Mucosa of descending colon (tissue), 3 donors: ENCODE measurements at regions of chr7 and their contacts with region 1.

Region 1: GRCh38 chr7:27160546-27161213 is 4.2 kb upstream of the HOXA7 start:
- DNase-seq: peak; percentile 93 to 94 (median 94)
- ATAC-seq: peak; percentile 70
- H3K4me3 ChIP-seq: peak overlapping the region; percentile 15
- H3K4me1 ChIP-seq: peaks cover 19% of the 10 kb centered on the region
- CTCF ChIP-seq: peak; percentile 99

Region 2: DNA sequence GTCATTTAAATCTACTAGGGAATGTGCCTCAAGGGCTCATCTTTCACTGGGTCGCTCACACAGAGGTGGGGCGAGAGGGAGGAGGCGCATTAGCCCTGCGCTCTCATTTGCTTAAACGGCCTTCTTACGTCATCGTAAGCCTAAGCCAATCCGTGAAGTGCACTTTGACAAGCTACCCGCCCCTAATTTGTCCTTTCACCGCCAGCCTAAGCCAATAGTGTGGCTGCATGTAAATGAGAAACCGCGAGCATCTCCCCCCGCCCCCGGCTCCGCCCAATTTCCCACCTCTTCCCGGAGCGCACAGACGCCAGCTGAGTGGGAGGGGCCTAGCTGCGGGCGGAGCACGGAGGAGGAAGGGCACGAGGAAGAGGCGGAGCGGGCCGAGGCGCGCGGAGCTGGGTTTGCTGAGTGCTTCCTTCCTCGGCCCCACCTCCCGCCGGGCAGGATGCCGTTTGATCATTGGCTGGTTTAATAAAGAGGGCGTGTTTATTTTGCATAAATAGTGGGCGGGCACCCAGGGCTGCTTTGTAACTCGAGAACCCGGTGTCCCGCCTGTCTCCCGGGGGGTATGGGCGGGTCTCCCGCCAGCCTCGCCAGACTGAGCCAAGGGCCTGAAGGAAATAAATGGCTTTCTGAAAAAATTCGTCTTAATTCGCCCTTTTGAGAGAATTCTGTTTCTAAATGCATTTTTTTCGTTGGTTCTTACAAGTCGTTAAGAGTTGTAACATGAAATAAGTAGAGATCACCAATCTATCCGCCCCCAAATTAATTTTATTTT is 1298.2 kb before region 1 on chr7:
- intact Hi-C with region 1: loop called (anchors 5 to 10 kb)
- DNase-seq: peak; percentile 99
- ATAC-seq: peak; percentile 93
- H3K4me3 ChIP-seq: peak overlapping the region; percentile 7
- H3K4me1 ChIP-seq: peaks cover 22% of the 10 kb centered on the region
- CTCF ChIP-seq: no peak

Region 3: DNA sequence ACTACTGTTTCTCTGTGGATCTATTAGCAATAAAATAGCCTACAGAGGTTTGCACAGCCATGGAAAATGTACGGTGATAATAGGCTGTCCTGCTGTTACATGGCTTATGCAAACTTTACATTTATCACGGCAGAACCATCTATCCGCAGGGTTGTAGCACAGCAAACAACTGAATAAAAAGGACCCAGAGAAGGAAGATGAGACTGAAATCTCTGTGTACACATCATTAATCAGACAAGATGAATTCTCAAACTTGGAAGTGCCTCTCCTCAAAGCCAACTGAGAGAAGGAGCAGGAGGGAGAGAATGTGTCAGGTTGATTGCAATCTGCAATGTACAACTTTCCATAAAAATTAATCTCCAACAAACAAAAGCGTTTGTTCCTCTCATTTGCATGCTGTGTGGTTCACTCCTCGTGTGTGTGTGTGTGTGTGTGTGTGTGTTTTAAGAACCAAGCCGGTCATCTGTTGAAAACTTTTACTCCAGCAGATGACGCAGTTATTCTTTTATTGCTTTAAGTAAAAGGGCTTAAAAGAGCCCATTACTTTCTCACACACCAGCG is 575.5 kb before region 1 on chr7:
- intact Hi-C with region 1: no loop called
- DNase-seq: no peak
- ATAC-seq: no peak
- H3K4me3 ChIP-seq: no peak overlapping the region
- H3K4me1 ChIP-seq: no peaks in the 10 kb centered on the region
- CTCF ChIP-seq: no peak